T-cell (primary cell): ENCODE measurements at regions of chr17 and their contacts with region 1.

Region 1: GRCh38 chr17:8900626-8901585 is 33.4 kb upstream of the PIK3R6 start:
- DNase-seq: peak in 12 of 35 experiments; percentile 17 to 47 (median 31)
- ATAC-seq: no peak
- H3K4me3 ChIP-seq: no peak overlapping the region
- H3K4me3 Mint-ChIP-seq: peak overlapping the region in 1 of 3 donors; percentile 62
- H3K27ac ChIP-seq: peak overlapping the region; percentile 93
- H3K27ac Mint-ChIP-seq: peak overlapping the region; percentile 71 to 92
- H3K4me1 ChIP-seq: peaks cover 59 to 69% of the 10 kb centered on the region in 2 experiments
- H3K4me1 Mint-ChIP-seq: peaks cover 65 to 81% (median 72%) of the 10 kb centered on the region in 3 donors
- H3K27me3 ChIP-seq: no peaks in the 10 kb centered on the region
- H3K27me3 Mint-ChIP-seq: no peaks in the 10 kb centered on the region

Region 2: GRCh38 chr17:8832711-8833352 is 68.1 kb before region 1 on chr17:
- CTCF ChIA-PET with region 1: no interaction called
- POLR2A ChIA-PET with region 1: no interaction called
- DNase-seq: peak in 12 of 35 experiments; percentile 3 to 36 (median 10)
- ATAC-seq: no peak
- H3K4me3 ChIP-seq: no peak overlapping the region
- H3K4me3 Mint-ChIP-seq: no peak overlapping the region
- H3K27ac ChIP-seq: no peak overlapping the region
- H3K27ac Mint-ChIP-seq: no peak overlapping the region
- H3K4me1 ChIP-seq: no peaks in the 10 kb centered on the region
- H3K4me1 Mint-ChIP-seq: no peaks in the 10 kb centered on the region
- H3K27me3 ChIP-seq: peaks cover 0 to 2% of the 10 kb centered on the region in 2 experiments
- H3K27me3 Mint-ChIP-seq: no peaks in the 10 kb centered on the region

Region 3: DNA sequence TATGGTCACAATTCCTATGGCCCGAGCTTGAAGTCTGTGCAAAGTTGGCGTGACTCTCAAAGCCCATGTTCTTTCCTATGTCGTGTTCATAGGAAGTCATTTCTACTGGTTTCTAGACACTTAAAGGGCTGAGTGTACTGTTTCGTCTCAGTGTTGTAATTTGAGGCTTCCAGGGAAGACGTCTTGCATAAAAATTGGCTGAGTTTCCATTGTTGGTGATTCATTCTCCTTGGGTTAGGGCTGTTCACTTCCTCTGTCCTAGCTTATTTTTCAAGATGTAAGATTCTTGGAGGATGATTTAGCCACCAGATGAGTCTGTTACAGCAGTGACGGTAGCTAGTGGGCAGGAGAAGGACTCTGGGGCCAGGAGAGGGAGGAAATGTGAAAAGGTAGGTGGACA is 21.5 kb after region 1 on chr17:
- CTCF ChIA-PET with region 1: no interaction called
- POLR2A ChIA-PET with region 1: interaction called in 1 of 2 experiments, 13 read pairs
- DNase-seq: no peak
- ATAC-seq: no peak
- H3K4me3 ChIP-seq: no peak overlapping the region
- H3K4me3 Mint-ChIP-seq: peak overlapping the region in 1 of 3 donors; percentile 18
- H3K27ac ChIP-seq: no peak overlapping the region
- H3K27ac Mint-ChIP-seq: peak overlapping the region; percentile 37 to 49
- H3K4me1 ChIP-seq: peaks cover 0 to 32% of the 10 kb centered on the region in 2 experiments
- H3K4me1 Mint-ChIP-seq: peaks cover 30 to 42% (median 39%) of the 10 kb centered on the region in 3 donors
- H3K27me3 ChIP-seq: no peaks in the 10 kb centered on the region
- H3K27me3 Mint-ChIP-seq: no peaks in the 10 kb centered on the region

Region 4: DNA sequence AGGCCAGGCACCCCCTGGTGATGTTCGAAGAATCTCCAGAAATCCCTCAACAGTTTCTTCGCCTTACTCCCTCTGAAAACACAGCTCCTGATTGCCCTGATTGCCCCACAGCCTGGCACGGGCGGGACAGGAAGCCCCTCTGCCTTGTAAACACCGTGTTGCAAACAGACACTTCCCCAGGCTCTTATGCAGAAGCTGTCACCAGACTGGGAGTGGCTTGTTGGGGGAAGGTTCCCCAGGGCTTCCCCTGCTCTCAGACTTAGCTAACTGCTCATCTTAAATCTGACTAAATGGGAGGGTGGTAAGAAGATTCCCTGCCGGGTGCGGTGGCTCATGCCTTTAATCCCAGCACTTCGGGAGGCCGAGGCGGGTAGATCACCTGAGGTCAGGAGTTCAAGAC is 53.4 kb after region 1 on chr17:
- CTCF ChIA-PET with region 1: interaction called in 1 of 2 experiments, 3 read pairs
- POLR2A ChIA-PET with region 1: interaction called, 3 to 12 read pairs
- DNase-seq: peak; percentile 49 to 93 (median 82)
- ATAC-seq: peak; percentile 97 to 99 (median 98)
- H3K4me3 ChIP-seq: peak overlapping the region; percentile 5 to 40
- H3K4me3 Mint-ChIP-seq: peak overlapping the region; percentile 73 to 79 (median 78)
- H3K27ac ChIP-seq: peak overlapping the region; percentile 86
- H3K27ac Mint-ChIP-seq: peak overlapping the region; percentile 97 to 98
- H3K4me1 ChIP-seq: peaks cover 64 to 75% of the 10 kb centered on the region in 2 experiments
- H3K4me1 Mint-ChIP-seq: peaks cover 96 to 99% (median 99%) of the 10 kb centered on the region in 3 donors
- H3K27me3 ChIP-seq: no peaks in the 10 kb centered on the region
- H3K27me3 Mint-ChIP-seq: no peaks in the 10 kb centered on the region

Region 5: DNA sequence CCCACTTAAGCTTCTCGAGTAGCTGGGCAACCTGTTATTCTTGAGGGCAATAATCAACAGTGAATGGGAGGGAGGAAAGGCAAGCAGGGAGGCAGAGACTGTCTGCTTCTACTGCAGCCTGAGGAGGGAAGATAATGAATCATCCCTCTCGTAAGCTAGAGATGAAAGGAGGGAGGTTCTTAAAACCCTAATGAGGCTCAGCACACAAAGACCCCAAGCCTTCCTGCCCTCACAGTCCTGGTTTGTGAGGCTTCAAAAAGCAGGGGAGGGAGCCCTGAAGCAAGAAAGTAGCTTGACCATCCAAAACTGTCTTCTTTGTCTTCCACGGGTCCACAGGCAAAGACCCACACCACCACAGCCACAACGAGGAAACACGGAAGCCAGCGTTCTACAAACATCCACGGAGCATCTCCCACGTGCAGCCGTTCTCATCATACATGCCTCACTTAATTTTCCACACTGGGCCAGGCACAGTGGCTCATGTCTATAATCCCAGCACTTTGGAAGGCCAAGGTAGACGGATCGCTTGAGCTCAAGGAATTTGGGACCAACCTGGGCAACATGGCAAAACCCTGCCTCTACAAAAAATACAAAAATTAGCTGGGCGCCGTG is 62.8 kb after region 1 on chr17:
- CTCF ChIA-PET with region 1: interaction called, 4 to 10 read pairs
- POLR2A ChIA-PET with region 1: interaction called, 3 to 4 read pairs
- DNase-seq: peak in 1 of 35 experiments; percentile 54
- ATAC-seq: peak in 3 of 4 experiments; percentile 39 to 47 (median 43)
- H3K4me3 ChIP-seq: peak overlapping the region; percentile 91 to 98
- H3K4me3 Mint-ChIP-seq: peak overlapping the region; percentile 88 to 100 (median 99)
- H3K27ac ChIP-seq: peak overlapping the region; percentile 76
- H3K27ac Mint-ChIP-seq: peak overlapping the region; percentile 92 to 96
- H3K4me1 ChIP-seq: peaks cover 50 to 65% of the 10 kb centered on the region in 2 experiments
- H3K4me1 Mint-ChIP-seq: peaks cover 65 to 69% (median 66%) of the 10 kb centered on the region in 3 donors
- H3K27me3 ChIP-seq: no peaks in the 10 kb centered on the region
- H3K27me3 Mint-ChIP-seq: no peaks in the 10 kb centered on the region